ENCODE measurements at regions of chr14 and their contacts with region 1.

Region 1: GRCh38 chr14:87944987-87945604 is 47.9 kb downstream of the GALC start:
- DNase-seq: peak in 2 of 9 experiments; percentile 74 to 79
- ATAC-seq: peak; percentile 69
- H3K4me3 ChIP-seq: no peak overlapping the region
- H3K4me3 Mint-ChIP-seq: no peak overlapping the region
- H3K27ac ChIP-seq: no peak overlapping the region
- H3K27ac Mint-ChIP-seq: no peak overlapping the region
- H3K4me1 ChIP-seq: peaks cover 4% of the 10 kb centered on the region
- H3K4me1 Mint-ChIP-seq: peaks cover 16% of the 10 kb centered on the region
- H3K27me3 ChIP-seq: no peaks in the 10 kb centered on the region
- H3K27me3 Mint-ChIP-seq: no peaks in the 10 kb centered on the region
- CTCF ChIP-seq: peak; percentile 90

Region 2: DNA sequence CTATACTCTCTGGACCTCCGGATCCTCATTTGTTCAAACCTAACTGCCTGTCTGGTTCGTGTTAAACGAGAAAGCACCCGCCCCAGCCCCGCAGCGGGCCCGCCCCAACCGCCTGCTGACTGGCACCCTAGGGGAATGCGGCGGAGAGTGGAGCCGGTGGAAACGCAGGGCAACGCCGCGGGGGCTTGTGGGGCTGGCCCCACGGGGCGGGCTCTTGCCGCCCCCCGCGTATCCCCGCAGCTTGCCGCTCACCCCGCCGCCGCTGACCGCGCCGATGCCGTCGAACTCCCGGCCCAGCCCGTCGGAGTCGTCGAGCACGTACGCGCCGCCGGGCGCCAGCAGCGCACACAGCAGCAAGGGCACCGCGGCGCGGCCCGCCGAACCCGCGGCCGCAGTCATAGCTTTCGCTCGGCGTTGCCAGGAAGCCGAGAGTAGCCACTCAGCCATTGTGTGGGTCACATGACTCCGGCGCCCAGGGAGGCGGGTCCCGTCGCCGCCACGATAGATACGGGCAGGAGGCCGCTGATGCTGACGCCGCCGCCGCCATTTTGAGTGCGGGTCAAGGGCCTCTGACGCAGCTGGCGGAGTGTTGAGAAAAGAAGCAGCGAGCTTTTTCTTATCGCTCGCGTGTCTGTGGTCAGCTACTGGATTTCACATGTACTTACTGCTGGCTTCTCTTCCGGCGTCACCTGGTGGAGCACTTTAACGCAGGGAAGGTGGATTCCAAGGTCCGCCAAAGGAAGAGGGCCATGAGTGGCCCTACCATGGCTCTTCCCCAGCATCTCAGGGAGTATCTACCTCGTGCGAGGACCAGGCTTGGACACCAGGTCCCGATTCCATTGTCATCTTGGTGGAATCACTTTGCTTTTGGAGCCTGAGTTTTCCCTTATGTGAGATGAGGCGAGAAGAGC is 47.9 kb after region 1 on chr14 and contains the start of gene GALC:
- CTCF ChIA-PET with region 1: interaction called, 11 read pairs
- POLR2A ChIA-PET with region 1: interaction called, 11 read pairs
- intact Hi-C with region 1: loop called in 1 of 2 experiments (anchors 5 kb)
- DNase-seq: peak; percentile 91 to 98 (median 95)
- ATAC-seq: peak; percentile 81
- H3K4me3 ChIP-seq: peak within 1 kb of the TSS; percentile 59 to 72
- H3K4me3 Mint-ChIP-seq: peak within 1 kb of the TSS; percentile 90
- H3K27ac ChIP-seq: peak within 1 kb of the TSS; percentile 83 to 96
- H3K27ac Mint-ChIP-seq: peak within 1 kb of the TSS; percentile 98
- H3K4me1 ChIP-seq: peaks cover 42% of the 10 kb centered on the region
- H3K4me1 Mint-ChIP-seq: peaks cover 73% of the 10 kb centered on the region
- H3K27me3 ChIP-seq: no peaks in the 10 kb centered on the region
- H3K27me3 Mint-ChIP-seq: no peaks in the 10 kb centered on the region
- CTCF ChIP-seq: peak; percentile 6
- total RNA-seq, gene GALC: 14.9 to 16.3 TPM

Region 3: GRCh38 chr14:88146881-88147649 is 202.0 kb after region 1 on chr14:
- CTCF ChIA-PET with region 1: interaction called, 13 read pairs
- POLR2A ChIA-PET with region 1: no interaction called
- intact Hi-C with region 1: no loop called
- DNase-seq: no peak
- ATAC-seq: no peak
- H3K4me3 ChIP-seq: no peak overlapping the region
- H3K4me3 Mint-ChIP-seq: no peak overlapping the region
- H3K27ac ChIP-seq: no peak overlapping the region
- H3K27ac Mint-ChIP-seq: no peak overlapping the region
- H3K4me1 ChIP-seq: no peaks in the 10 kb centered on the region
- H3K4me1 Mint-ChIP-seq: no peaks in the 10 kb centered on the region
- H3K27me3 ChIP-seq: no peaks in the 10 kb centered on the region
- H3K27me3 Mint-ChIP-seq: no peaks in the 10 kb centered on the region
- CTCF ChIP-seq: no peak

Region 4: DNA sequence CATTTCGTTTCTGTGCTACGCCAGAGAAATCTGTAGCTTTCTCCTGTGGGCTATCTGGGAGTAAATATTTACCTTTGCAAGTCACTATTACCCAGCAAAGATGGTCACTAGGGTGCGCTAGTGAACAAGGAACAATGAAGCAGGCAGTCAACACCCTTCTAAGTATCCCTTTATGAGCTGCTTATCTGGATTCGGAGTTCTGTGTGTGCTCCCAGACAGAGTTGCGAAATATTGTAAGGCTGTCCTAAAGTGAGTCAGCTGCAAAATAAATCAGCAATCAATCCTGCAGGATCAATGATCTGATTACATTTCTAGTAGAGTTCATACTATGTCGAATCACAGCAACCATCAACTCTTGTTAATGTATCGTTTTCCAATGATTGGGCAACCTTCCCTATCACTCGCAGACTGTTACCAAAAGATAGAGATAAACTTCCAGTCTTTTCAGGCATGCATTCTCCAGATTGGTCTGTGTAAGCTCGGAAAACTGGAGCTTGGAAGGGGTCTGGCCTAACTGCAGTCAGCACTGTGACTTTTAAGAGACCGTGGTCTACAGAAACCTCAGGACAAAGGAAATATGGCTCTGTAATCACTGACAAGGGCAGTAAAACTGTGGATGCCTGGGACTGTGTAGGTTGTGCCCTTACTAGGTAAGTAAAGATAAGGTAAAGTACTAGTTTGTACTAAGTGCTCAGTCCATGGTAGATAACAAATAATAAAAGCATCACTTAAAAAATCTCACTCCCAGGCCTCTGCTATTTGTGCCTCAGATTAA is 244.5 kb after region 1 on chr14:
- CTCF ChIA-PET with region 1: interaction called, 23 read pairs
- POLR2A ChIA-PET with region 1: no interaction called
- intact Hi-C with region 1: no loop called
- DNase-seq: peak in 7 of 9 experiments; percentile 20 to 68 (median 52)
- ATAC-seq: no peak
- H3K4me3 ChIP-seq: no peak overlapping the region
- H3K4me3 Mint-ChIP-seq: peak overlapping the region; percentile 55
- H3K27ac ChIP-seq: no peak overlapping the region
- H3K27ac Mint-ChIP-seq: no peak overlapping the region
- H3K4me1 ChIP-seq: no peaks in the 10 kb centered on the region
- H3K4me1 Mint-ChIP-seq: peaks cover 5% of the 10 kb centered on the region
- H3K27me3 ChIP-seq: peaks cover 0 to 2% of the 10 kb centered on the region in 2 experiments
- H3K27me3 Mint-ChIP-seq: peaks cover 25% of the 10 kb centered on the region
- CTCF ChIP-seq: peak; percentile 21

Region 5: GRCh38 chr14:88385345-88386101 is 440.4 kb after region 1 on chr14 and contains the start of gene SPATA7:
- CTCF ChIA-PET with region 1: interaction called, 8 read pairs
- POLR2A ChIA-PET with region 1: no interaction called
- intact Hi-C with region 1: loop called (anchors 5 to 10 kb)
- DNase-seq: peak; percentile 41 to 89 (median 79)
- ATAC-seq: peak; percentile 88
- H3K4me3 ChIP-seq: peak within 1 kb of the TSS; percentile 93 to 96
- H3K4me3 Mint-ChIP-seq: peak within 1 kb of the TSS; percentile 94
- H3K27ac ChIP-seq: peak within 1 kb of the TSS; percentile 72 to 77
- H3K27ac Mint-ChIP-seq: peak within 1 kb of the TSS; percentile 87
- H3K4me1 ChIP-seq: peaks cover 8% of the 10 kb centered on the region
- H3K4me1 Mint-ChIP-seq: peaks cover 19% of the 10 kb centered on the region
- H3K27me3 ChIP-seq: no peaks in the 10 kb centered on the region
- H3K27me3 Mint-ChIP-seq: no peaks in the 10 kb centered on the region
- CTCF ChIP-seq: no peak
- total RNA-seq, gene SPATA7: 1.9 to 3.2 TPM

Region 6: GRCh38 chr14:88562831-88563686 is 618.0 kb after region 1 on chr14 and contains the start of gene ZC3H14:
- CTCF ChIA-PET with region 1: no interaction called
- POLR2A ChIA-PET with region 1: no interaction called
- intact Hi-C with region 1: loop called (anchors 10 kb)
- DNase-seq: peak; percentile 69 to 94 (median 86)
- ATAC-seq: peak; percentile 95
- H3K4me3 ChIP-seq: peak within 1 kb of the TSS; percentile 75 to 91
- H3K4me3 Mint-ChIP-seq: peak within 1 kb of the TSS; percentile 96
- H3K27ac ChIP-seq: peak within 1 kb of the TSS; percentile 52 to 66
- H3K27ac Mint-ChIP-seq: peak within 1 kb of the TSS; percentile 91
- H3K4me1 ChIP-seq: peaks cover 20% of the 10 kb centered on the region
- H3K4me1 Mint-ChIP-seq: peaks cover 35% of the 10 kb centered on the region
- H3K27me3 ChIP-seq: no peaks in the 10 kb centered on the region
- H3K27me3 Mint-ChIP-seq: peaks cover 7% of the 10 kb centered on the region
- CTCF ChIP-seq: no peak
- total RNA-seq, gene ZC3H14: 36.3 to 39.3 TPM